ENCODE measurements at regions of chr7 and their contacts with region 1.

Region 1: GRCh38 chr7:19754521-19755116 is 18.8 kb downstream of the TMEM196 start:
- DNase-seq: peak; percentile 17
- CTCF ChIP-seq: peak; percentile 57

Region 2: GRCh38 chr7:19619122-19619521 is 135.5 kb before region 1 on chr7:
- in situ Hi-C with region 1: no loop called
- DNase-seq: no peak
- CTCF ChIP-seq: no peak

Region 3: DNA sequence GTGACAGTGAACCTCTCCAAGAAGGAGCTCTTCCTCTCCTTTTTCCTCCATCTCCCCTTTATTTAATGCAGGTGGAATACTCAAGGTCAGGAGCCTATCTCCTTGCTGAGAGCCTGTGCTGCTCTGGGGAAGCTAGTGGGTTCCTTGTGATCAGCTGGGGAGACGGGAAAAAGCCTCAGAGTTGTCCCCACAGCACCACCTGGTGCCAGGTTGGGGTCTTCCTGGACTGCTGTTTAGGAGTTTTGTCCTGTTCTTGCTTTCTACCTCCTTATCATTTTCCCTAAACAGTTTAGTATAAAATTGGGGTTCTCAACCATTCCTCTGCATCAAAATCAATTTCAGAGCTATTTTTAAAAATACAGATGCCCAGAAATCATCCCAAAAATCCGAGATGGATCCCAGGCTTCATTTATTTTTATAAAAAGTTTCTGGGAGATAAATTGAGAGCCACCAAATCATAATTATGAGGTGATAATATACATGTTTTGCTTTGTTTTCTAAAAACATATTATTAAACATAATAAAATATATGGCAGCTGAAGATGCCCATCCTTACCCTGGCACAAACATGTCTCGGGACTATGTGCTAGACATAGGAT is 418.2 kb after region 1 on chr7:
- in situ Hi-C with region 1: loop called (anchors 25 kb)
- DNase-seq: peak; percentile 17
- CTCF ChIP-seq: peak; percentile 63

Region 4: GRCh38 chr7:20310963-20311742 is 556.5 kb after region 1 on chr7:
- in situ Hi-C with region 1: loop called (anchors 25 kb)
- DNase-seq: no peak
- CTCF ChIP-seq: peak; percentile 48

Region 5: GRCh38 chr7:20798081-20798693 is 1043.6 kb after region 1 on chr7:
- in situ Hi-C with region 1: no loop called
- DNase-seq: peak; percentile 84
- CTCF ChIP-seq: no peak